ENCODE measurements at regions of chr14 and their contacts with region 1.

Region 1: DNA sequence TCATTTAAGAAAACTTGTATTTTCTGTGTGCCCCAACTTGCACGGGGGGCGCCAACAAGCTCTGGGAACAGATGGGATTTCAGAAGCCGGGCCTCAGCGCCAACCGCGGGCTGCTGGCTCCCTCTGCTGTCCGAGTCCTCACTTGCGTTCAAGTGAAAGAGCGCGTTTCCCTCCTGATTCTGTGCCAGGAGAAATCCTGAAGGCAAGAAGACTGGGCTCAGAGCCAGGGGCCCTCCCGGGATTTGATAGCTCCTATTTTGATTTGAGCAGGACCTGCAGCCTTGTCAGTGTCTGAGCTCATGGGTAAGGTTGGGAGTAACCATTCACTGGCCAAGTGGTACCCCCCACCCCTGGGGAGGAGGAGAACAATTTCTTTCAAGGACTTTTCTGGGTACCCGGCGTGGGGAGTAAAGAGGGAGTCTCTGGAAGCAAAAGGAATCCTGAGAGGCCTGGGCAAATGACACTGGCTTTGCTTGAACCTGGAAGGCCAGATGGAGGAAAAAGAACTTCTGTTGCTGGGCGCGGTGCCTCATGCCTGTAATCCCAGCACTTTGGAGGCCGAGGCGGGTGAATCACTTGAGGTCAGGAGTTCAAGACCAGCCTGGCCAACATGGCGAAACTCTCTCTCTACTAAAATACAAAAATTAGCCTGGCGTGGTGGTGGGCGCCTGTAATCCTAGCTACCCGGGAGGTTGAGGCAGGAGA is 179.0 kb upstream of the RGS6 start:
- DNase-seq: peak; percentile 78 to 85
- H3K4me3 ChIP-seq: no peak overlapping the region
- H3K4me3 Mint-ChIP-seq: no peak overlapping the region
- H3K27ac Mint-ChIP-seq: no peak overlapping the region
- H3K4me1 ChIP-seq: peaks cover 6% of the 10 kb centered on the region
- H3K4me1 Mint-ChIP-seq: no peaks in the 10 kb centered on the region
- H3K27me3 ChIP-seq: no peaks in the 10 kb centered on the region
- H3K27me3 Mint-ChIP-seq: no peaks in the 10 kb centered on the region
- CTCF ChIP-seq: peak; percentile 92 to 94

Region 2: GRCh38 chr14:71103662-71104484 is 649.4 kb before region 1 on chr14:
- CTCF ChIA-PET with region 1: no interaction called
- POLR2A ChIA-PET with region 1: no interaction called
- intact Hi-C with region 1: loop called (anchors 1 kb)
- DNase-seq: peak in 1 of 2 experiments; percentile 61
- H3K4me3 ChIP-seq: no peak overlapping the region
- H3K4me3 Mint-ChIP-seq: no peak overlapping the region
- H3K27ac Mint-ChIP-seq: no peak overlapping the region
- H3K4me1 ChIP-seq: peaks cover 17% of the 10 kb centered on the region; the same call in 1 of the 2 replicates
- H3K4me1 Mint-ChIP-seq: peaks cover 13% of the 10 kb centered on the region
- H3K27me3 ChIP-seq: no peaks in the 10 kb centered on the region
- H3K27me3 Mint-ChIP-seq: no peaks in the 10 kb centered on the region
- CTCF ChIP-seq: peak; percentile 81 to 82

Region 3: GRCh38 chr14:71695611-71696350 is 57.5 kb before region 1 on chr14:
- CTCF ChIA-PET with region 1: no interaction called
- POLR2A ChIA-PET with region 1: no interaction called
- intact Hi-C with region 1: no loop called
- DNase-seq: no peak
- H3K4me3 ChIP-seq: no peak overlapping the region
- H3K4me3 Mint-ChIP-seq: no peak overlapping the region
- H3K27ac Mint-ChIP-seq: no peak overlapping the region
- H3K4me1 ChIP-seq: peaks cover 5% of the 10 kb centered on the region; the same call in 1 of the 2 replicates
- H3K4me1 Mint-ChIP-seq: peaks cover 26% of the 10 kb centered on the region
- H3K27me3 ChIP-seq: no peaks in the 10 kb centered on the region
- H3K27me3 Mint-ChIP-seq: no peaks in the 10 kb centered on the region
- CTCF ChIP-seq: no peak

Region 4: GRCh38 chr14:71720978-71721624 is 32.2 kb before region 1 on chr14:
- CTCF ChIA-PET with region 1: interaction called, 6 read pairs
- POLR2A ChIA-PET with region 1: no interaction called
- intact Hi-C with region 1: loop called (anchors 1 kb)
- DNase-seq: peak; percentile 57 to 59
- H3K4me3 ChIP-seq: no peak overlapping the region
- H3K4me3 Mint-ChIP-seq: no peak overlapping the region
- H3K27ac Mint-ChIP-seq: no peak overlapping the region
- H3K4me1 ChIP-seq: no peaks in the 10 kb centered on the region
- H3K4me1 Mint-ChIP-seq: peaks cover 9% of the 10 kb centered on the region
- H3K27me3 ChIP-seq: no peaks in the 10 kb centered on the region
- H3K27me3 Mint-ChIP-seq: no peaks in the 10 kb centered on the region
- CTCF ChIP-seq: peak; percentile 36 to 50